Stomach (tissue), 19 donors: ENCODE measurements at regions of chr20 and their contacts with region 1.

Region 1: DNA sequence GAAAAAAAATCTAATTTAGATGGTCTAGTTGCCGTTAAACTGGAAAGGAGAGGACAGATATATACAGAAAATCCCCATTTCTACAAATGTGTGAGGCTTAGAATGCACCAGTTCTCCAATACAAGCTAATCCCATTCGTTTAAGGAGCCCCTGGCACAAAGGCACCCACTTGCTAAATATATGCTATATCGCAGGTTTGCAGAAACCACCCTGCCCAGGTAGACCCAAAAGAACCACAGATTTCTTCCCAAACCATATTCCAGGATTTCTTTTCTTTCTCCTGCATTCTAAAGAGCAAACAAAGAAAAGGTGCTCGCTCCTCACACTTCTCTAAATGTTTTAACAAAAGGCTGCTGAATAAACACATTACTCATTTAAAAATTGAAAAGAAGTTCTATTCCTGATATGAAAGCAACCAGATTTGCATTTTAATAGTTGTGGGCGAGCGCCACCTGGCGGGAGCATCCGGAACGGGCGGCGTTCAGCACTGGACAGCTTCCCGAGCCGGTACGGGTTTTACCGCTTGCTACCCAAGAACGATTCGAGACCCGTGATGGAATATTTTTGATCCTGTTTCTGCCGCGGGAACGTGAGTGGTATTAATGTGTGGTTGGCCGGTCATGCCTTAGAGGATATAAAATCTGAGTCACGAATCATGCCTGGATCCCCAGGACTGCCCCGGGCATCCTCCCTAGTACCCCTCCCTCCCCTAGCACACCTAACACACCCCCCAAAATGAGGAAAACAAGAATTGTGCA is 2.1 kb downstream of the PTPRT start:
- DNase-seq: peak; percentile 72 to 87
- H3K4me3 ChIP-seq: peak overlapping the region in 3 of 4 donors; percentile 17 to 27 (median 23)
- H3K27ac ChIP-seq: no peak overlapping the region
- H3K4me1 ChIP-seq: peaks cover 0 to 25% (median 11%) of the 10 kb centered on the region in 4 donors
- H3K27me3 ChIP-seq: peaks cover 4 to 74% (median 28%) of the 10 kb centered on the region in 3 donors
- CTCF ChIP-seq: peak in 5 of 7 experiments; percentile 57 to 95 (median 88)
- EP300 ChIP-seq: no peak
- POLR2A ChIP-seq: no peak

Region 2: DNA sequence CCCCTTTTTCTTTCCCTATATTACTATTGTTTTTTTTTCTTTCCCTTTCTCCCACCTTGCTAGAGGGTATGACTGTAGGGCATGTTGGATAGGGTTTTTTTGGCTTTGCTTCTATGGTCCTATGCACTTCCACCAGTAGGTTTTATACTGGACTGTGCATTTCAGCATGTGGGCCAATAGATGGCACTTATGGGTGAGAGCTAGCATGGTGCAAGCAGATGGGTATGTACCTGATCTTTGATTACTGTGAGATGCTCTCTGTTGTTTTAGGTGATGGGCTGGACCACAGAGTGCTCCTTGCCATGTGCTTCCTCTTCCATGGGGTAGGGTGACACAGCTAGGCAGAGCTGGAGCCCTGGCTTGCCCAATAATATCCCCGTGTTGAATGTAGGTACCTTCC is 1441.0 kb before region 1 on chr20:
- intact Hi-C with region 1: loop called (anchors 10 kb)
- DNase-seq: no peak
- H3K4me3 ChIP-seq: no peak overlapping the region
- H3K27ac ChIP-seq: no peak overlapping the region
- H3K4me1 ChIP-seq: no peaks in the 10 kb centered on the region
- H3K27me3 ChIP-seq: peaks cover 0 to 17% (median 5%) of the 10 kb centered on the region in 3 donors
- CTCF ChIP-seq: no peak
- EP300 ChIP-seq: no peak
- POLR2A ChIP-seq: no peak

Region 3: DNA sequence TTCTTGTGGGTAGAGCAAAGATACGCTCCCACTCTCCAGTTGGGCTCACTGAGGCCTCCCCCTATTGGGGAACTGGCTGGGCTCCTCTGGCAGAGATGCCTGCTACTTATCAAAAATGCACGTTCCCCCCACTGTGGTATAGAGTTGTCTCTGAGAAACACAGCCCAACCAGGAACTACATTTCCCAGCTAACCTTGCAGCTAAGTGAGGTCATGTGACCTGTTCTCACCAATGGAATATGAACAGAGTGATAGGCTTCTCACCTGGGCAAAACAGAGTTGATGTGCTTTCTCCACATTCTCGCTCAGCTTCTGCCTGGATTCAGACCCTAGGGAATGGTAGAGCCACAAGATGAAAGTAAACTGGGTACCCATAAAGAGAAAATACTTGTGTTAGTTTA is 51.2 kb after region 1 on chr20:
- intact Hi-C with region 1: no loop called
- DNase-seq: no peak
- H3K4me3 ChIP-seq: no peak overlapping the region
- H3K27ac ChIP-seq: no peak overlapping the region
- H3K4me1 ChIP-seq: no peaks in the 10 kb centered on the region
- H3K27me3 ChIP-seq: peaks cover 0 to 64% (median 0%) of the 10 kb centered on the region in 3 donors
- CTCF ChIP-seq: no peak
- EP300 ChIP-seq: no peak
- POLR2A ChIP-seq: no peak

Region 4: DNA sequence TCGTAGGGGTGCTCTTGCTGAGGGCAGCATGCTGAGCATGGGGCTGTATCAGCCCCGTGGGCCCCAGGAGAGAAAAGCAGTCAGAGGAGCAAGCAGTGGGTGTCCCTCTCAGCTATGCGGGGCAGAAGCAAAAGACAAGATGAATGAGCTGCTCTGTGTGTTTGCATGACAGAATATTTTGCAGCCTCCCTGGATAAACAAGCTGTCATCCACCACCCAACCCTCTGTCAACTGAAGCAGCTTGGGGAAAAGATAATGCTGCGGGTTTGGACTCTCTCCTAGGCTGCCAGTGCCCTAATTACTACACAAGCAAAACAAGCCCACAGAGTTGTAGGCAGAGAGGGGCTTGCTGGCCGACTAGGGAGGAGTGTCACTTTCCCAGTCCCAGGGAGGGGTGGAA is 84.3 kb after region 1 on chr20:
- intact Hi-C with region 1: no loop called
- DNase-seq: no peak
- H3K4me3 ChIP-seq: no peak overlapping the region
- H3K27ac ChIP-seq: no peak overlapping the region
- H3K4me1 ChIP-seq: no peaks in the 10 kb centered on the region
- H3K27me3 ChIP-seq: peaks cover 0 to 21% (median 0%) of the 10 kb centered on the region in 3 donors
- CTCF ChIP-seq: no peak
- EP300 ChIP-seq: no peak
- POLR2A ChIP-seq: no peak